A673 (cell line): ENCODE measurements at regions of chr18 and their contacts with region 1.

Region 1: GRCh38 chr18:59837586-59837985 is 62.2 kb upstream of the PMAIP1 start:
- DNase-seq: peak; percentile 76
- H3K4me3 ChIP-seq: no peak overlapping the region
- H3K27ac ChIP-seq: no peak overlapping the region
- H3K4me1 ChIP-seq: no peaks in the 10 kb centered on the region
- H3K27me3 ChIP-seq: no peaks in the 10 kb centered on the region
- CTCF ChIP-seq: peak; percentile 91

Region 2: DNA sequence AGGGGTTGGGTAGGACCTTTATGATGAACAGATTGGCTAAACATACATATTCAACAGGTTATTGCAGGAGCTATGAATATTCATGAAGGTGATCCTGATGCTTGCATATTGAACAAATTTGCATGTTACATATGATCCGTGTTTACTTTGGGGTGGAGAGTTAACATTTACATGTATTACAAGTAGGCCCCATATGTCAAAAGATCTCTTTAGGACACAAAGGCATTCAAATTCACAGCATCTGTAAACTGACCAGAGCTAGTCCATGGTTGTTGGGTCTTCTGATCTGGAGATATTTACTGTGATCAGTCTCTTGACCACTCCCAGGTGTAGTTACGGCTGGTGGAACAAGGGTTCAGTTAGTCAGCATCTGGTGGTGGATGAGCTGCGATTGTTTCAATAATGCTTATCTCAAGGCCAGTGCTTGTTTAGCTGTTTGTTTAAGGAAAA is 142.6 kb after region 1 on chr18:
- CTCF ChIA-PET with region 1: no interaction called
- POLR2A ChIA-PET with region 1: no interaction called
- intact Hi-C with region 1: loop called (anchors 5 kb)
- DNase-seq: no peak
- H3K4me3 ChIP-seq: no peak overlapping the region
- H3K27ac ChIP-seq: no peak overlapping the region
- H3K4me1 ChIP-seq: no peaks in the 10 kb centered on the region
- H3K27me3 ChIP-seq: no peaks in the 10 kb centered on the region
- CTCF ChIP-seq: no peak

Region 3: DNA sequence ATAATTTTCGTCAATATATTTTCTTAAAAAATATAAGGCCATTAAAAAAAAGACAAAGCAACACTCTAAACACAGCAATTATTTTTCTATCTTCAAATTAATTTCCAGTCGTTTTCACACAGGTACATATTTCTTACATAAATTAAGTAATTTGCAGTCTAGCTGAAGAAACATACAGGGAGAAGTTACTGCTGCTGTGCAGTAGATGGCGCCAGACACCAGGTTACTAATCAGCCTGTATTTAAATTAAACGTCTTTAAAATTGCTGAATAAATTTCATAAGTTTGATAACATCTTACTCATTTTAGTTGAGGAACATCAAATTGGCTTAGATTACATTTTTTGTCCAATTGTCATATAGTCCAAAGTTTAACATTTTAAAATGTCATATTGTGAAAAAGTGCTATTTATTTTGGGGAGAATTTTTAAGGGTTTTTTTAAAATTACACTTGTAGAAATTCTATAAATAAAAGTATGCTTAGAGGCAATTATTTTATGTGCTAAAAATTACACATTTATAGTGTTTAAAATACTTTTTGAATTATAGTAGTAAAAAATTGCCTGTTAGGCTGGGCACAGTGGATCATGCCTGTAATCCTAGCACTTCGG is 150.6 kb after region 1 on chr18:
- CTCF ChIA-PET with region 1: no interaction called
- POLR2A ChIA-PET with region 1: no interaction called
- intact Hi-C with region 1: loop called (anchors 2 kb)
- DNase-seq: peak; percentile 51
- H3K4me3 ChIP-seq: no peak overlapping the region
- H3K27ac ChIP-seq: no peak overlapping the region
- H3K4me1 ChIP-seq: no peaks in the 10 kb centered on the region
- H3K27me3 ChIP-seq: no peaks in the 10 kb centered on the region
- CTCF ChIP-seq: peak; percentile 97

Region 4: DNA sequence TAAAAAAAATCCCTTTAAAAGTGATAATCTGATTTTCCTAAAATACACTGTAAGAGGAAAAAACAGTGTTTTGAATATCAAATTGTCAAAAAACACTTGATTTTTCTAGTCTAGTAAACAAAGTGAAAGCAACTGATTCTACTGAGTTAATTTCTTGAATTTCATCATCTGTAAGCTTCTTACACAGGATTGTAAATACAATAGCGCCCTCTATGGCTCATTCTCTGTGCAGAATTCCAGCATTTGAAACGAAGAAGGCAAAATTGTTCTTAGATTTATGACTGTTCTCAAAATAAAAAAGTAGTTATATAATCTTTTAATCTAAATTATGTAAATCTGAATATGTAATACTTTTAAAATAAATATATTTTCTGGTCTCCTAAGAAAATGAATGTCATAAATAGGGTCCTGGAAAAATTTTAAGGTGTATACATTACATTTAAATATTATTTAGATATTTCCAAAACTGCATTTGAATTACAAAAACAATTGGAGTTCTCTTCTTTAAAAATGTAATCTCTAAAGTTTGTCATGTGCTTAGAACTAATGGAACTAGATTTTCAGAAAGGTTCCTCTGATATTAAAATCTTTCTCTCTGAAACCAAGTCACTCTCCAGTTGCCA is 711.9 kb after region 1 on chr18:
- CTCF ChIA-PET with region 1: no interaction called
- POLR2A ChIA-PET with region 1: no interaction called
- intact Hi-C with region 1: loop called (anchors 2 kb)
- DNase-seq: peak; percentile 75
- H3K4me3 ChIP-seq: no peak overlapping the region
- H3K27ac ChIP-seq: no peak overlapping the region
- H3K4me1 ChIP-seq: no peaks in the 10 kb centered on the region
- H3K27me3 ChIP-seq: no peaks in the 10 kb centered on the region
- CTCF ChIP-seq: peak; percentile 83